ENCODE measurements at regions of chr1 and their contacts with region 1.

Region 1: GRCh38 chr1:112706908-112707663 is at the start of gene RHOC:
- DNase-seq: peak; percentile 47 to 75 (median 72)
- H3K4me3 ChIP-seq: peak within 1 kb of the TSS; percentile 45 to 79 (median 73)
- H3K4me3 Mint-ChIP-seq: peak within 1 kb of the TSS; percentile 76 to 89
- H3K27ac ChIP-seq: no peak within 1 kb of the TSS
- H3K27ac Mint-ChIP-seq: peak within 1 kb of the TSS in 5 of 7 donors; percentile 30 to 77 (median 42)
- H3K4me1 ChIP-seq: peaks cover 26 to 38% of the 10 kb centered on the region in 2 donors
- H3K4me1 Mint-ChIP-seq: peaks cover 35% of the 10 kb centered on the region
- H3K27me3 ChIP-seq: peaks cover 0 to 36% of the 10 kb centered on the region in 2 donors
- H3K27me3 Mint-ChIP-seq: peaks cover 31 to 61% (median 32%) of the 10 kb centered on the region in 3 donors
- CTCF ChIP-seq: peak; percentile 94
- polyA plus RNA-seq, gene RHOC: 78.9 to 119 (median 91.5) TPM

Region 2: DNA sequence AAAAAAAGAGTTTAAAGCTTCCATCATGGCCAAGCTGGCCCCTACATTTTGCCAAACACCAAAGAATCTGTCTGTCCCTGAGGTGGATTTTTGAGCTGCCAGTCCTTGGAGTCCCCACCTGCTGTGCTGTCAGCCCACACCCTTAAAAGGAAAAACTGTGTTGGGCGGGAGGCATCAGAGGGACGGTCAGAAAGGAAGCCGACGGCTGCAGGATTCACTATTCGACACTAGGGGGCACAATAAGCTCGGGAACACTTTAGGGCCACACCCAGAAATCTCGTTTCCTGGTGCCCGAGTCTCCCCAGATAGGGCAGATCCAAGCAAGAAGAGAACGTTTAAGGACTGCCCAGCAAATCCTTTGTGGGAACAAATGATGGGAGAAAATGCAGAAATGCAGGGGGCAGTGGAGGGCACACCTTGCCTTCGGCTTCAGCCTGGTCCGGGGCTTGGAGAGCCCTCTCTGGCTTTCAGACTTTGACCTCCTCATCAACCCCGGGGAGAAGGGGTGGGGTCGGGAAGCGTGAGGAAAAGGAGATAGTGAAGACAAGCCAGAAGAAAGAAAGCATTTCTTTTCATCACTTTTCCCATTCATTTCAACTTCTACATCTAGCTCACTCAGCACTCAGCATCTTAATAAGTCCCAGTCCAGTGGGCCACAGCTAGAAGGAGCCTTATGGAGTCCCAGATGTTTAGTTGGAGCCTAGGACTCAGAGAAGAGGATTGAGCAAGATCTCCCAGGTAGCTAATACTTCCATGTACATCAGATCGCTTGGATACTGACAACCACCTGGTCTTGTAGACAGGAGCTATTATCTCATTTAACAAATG is 316.1 kb before region 1 on chr1:
- intact Hi-C with region 1: loop called (anchors 2 to 5 kb)
- DNase-seq: peak; percentile 79 to 86 (median 83)
- H3K4me3 ChIP-seq: peak overlapping the region in 1 of 3 experiments; percentile 51
- H3K4me3 Mint-ChIP-seq: peak overlapping the region; percentile 57 to 60
- H3K27ac ChIP-seq: no peak overlapping the region
- H3K27ac Mint-ChIP-seq: peak overlapping the region in 2 of 7 donors; percentile 25 to 44
- H3K4me1 ChIP-seq: peaks cover 33 to 39% of the 10 kb centered on the region in 2 donors
- H3K4me1 Mint-ChIP-seq: peaks cover 30% of the 10 kb centered on the region
- H3K27me3 ChIP-seq: peaks cover 0 to 2% of the 10 kb centered on the region in 2 donors
- H3K27me3 Mint-ChIP-seq: peaks cover 3 to 13% (median 8%) of the 10 kb centered on the region in 3 donors
- CTCF ChIP-seq: peak; percentile 88

Region 3: GRCh38 chr1:112501810-112502641 is 205.1 kb before region 1 on chr1:
- intact Hi-C with region 1: loop called (anchors 5 to 10 kb)
- DNase-seq: peak; percentile 19 to 47 (median 31)
- H3K4me3 ChIP-seq: peak overlapping the region in 2 of 3 experiments; percentile 16 to 71
- H3K4me3 Mint-ChIP-seq: peak overlapping the region; percentile 70 to 80
- H3K27ac ChIP-seq: no peak overlapping the region
- H3K27ac Mint-ChIP-seq: peak overlapping the region in 1 of 7 donors; percentile 26
- H3K4me1 ChIP-seq: peaks cover 11 to 12% of the 10 kb centered on the region in 2 donors
- H3K4me1 Mint-ChIP-seq: peaks cover 11% of the 10 kb centered on the region
- H3K27me3 ChIP-seq: peaks cover 38 to 73% of the 10 kb centered on the region in 2 donors
- H3K27me3 Mint-ChIP-seq: peaks cover 58 to 81% (median 69%) of the 10 kb centered on the region in 3 donors
- CTCF ChIP-seq: peak; percentile 67

Region 4: DNA sequence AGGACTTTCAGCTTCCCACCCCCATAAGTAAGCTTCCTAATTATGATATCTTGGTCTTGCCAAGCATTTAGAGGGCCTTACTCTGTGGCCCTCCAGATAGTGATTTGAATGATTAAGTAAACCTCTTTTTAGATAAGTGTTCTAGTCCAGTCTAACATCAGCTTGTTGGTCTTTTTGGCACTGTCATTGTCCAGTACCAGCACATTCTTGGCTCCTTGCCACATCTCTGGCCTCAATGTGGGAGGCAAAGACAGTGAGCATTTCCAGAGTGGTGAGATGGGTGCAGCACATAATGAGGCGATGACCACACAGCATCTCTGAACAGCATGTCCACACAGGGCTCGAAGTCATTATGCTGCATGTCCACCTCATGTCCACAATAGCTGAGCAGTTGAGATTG is 81.4 kb before region 1 on chr1:
- intact Hi-C with region 1: loop called in 1 of 2 experiments (anchors 5 kb)
- DNase-seq: peak in 1 of 3 donors; percentile 44
- H3K4me3 ChIP-seq: no peak overlapping the region
- H3K4me3 Mint-ChIP-seq: no peak overlapping the region
- H3K27ac ChIP-seq: peak overlapping the region in 1 of 2 donors; percentile 65
- H3K27ac Mint-ChIP-seq: peak overlapping the region; percentile 47 to 86 (median 70)
- H3K4me1 ChIP-seq: peaks cover 41 to 87% of the 10 kb centered on the region in 2 donors
- H3K4me1 Mint-ChIP-seq: peaks cover 72% of the 10 kb centered on the region
- H3K27me3 ChIP-seq: no peaks in the 10 kb centered on the region
- H3K27me3 Mint-ChIP-seq: no peaks in the 10 kb centered on the region
- CTCF ChIP-seq: no peak

Region 5: GRCh38 chr1:112651205-112651604 is 55.9 kb before region 1 on chr1:
- intact Hi-C with region 1: no loop called
- DNase-seq: no peak
- H3K4me3 ChIP-seq: no peak overlapping the region
- H3K4me3 Mint-ChIP-seq: no peak overlapping the region
- H3K27ac ChIP-seq: no peak overlapping the region
- H3K27ac Mint-ChIP-seq: peak overlapping the region in 2 of 7 donors; percentile 70 to 78
- H3K4me1 ChIP-seq: no peaks in the 10 kb centered on the region
- H3K4me1 Mint-ChIP-seq: no peaks in the 10 kb centered on the region
- H3K27me3 ChIP-seq: no peaks in the 10 kb centered on the region
- H3K27me3 Mint-ChIP-seq: no peaks in the 10 kb centered on the region
- CTCF ChIP-seq: no peak

Region 6: DNA sequence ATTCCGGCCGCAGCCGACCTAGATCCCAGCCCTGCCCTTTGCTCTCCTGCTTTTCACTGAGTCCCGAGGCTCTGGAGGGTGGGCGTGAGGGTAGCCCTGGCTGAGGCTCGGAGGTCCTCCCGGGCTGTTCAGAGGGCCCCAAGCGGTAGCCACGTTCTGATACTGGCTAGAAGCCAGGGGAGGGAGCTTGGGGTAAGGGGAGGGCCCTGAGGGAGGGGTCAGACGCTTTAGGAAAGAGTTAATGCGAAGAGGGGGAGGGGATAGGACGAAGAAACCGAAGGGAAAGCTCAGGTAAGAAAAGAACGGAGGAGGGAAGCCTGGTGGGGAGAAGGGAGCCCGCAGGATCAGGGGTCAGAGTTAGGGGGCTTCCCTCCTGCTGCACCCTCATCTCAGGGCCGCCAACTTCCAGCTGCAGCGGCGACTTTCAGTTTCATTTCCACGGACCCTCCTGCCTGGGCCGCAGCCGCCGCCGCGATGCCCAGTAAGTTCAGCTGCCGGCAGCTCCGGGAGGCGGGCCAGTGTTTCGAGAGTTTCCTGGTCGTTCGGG is 32.6 kb before region 1 on chr1 and contains the start of gene MOV10:
- intact Hi-C with region 1: loop called in 1 of 2 experiments (anchors 5 kb)
- DNase-seq: peak; percentile 51 to 67 (median 53)
- H3K4me3 ChIP-seq: peak within 1 kb of the TSS; percentile 84 to 98 (median 95)
- H3K4me3 Mint-ChIP-seq: peak within 1 kb of the TSS; percentile 98 to 99
- H3K27ac ChIP-seq: peak within 1 kb of the TSS; percentile 58 to 84
- H3K27ac Mint-ChIP-seq: peak within 1 kb of the TSS; percentile 78 to 94 (median 92)
- H3K4me1 ChIP-seq: peaks cover 20 to 23% of the 10 kb centered on the region in 2 donors
- H3K4me1 Mint-ChIP-seq: peaks cover 26% of the 10 kb centered on the region
- H3K27me3 ChIP-seq: no peaks in the 10 kb centered on the region
- H3K27me3 Mint-ChIP-seq: peaks cover 0 to 10% (median 7%) of the 10 kb centered on the region in 3 donors
- CTCF ChIP-seq: no peak
- polyA plus RNA-seq, gene MOV10: 12.0 to 61.2 (median 13.6) TPM

Region 7: GRCh38 chr1:113042285-113043143 is 335.4 kb after region 1 on chr1:
- intact Hi-C with region 1: loop called in 1 of 2 experiments (anchors 10 kb)
- DNase-seq: peak; percentile 88 to 92 (median 90)
- H3K4me3 ChIP-seq: peak overlapping the region in 1 of 3 experiments; percentile 49
- H3K4me3 Mint-ChIP-seq: peak overlapping the region in 1 of 2 donors; percentile 55
- H3K27ac ChIP-seq: peak overlapping the region; percentile 63 to 69
- H3K27ac Mint-ChIP-seq: peak overlapping the region; percentile 64 to 92 (median 83)
- H3K4me1 ChIP-seq: peaks cover 46 to 50% of the 10 kb centered on the region in 2 donors
- H3K4me1 Mint-ChIP-seq: peaks cover 45% of the 10 kb centered on the region
- H3K27me3 ChIP-seq: no peaks in the 10 kb centered on the region
- H3K27me3 Mint-ChIP-seq: peaks cover 2 to 6% (median 4%) of the 10 kb centered on the region in 3 donors
- CTCF ChIP-seq: peak; percentile 70